ENCODE measurements at regions of chr10 and their contacts with region 1.

Region 1: DNA sequence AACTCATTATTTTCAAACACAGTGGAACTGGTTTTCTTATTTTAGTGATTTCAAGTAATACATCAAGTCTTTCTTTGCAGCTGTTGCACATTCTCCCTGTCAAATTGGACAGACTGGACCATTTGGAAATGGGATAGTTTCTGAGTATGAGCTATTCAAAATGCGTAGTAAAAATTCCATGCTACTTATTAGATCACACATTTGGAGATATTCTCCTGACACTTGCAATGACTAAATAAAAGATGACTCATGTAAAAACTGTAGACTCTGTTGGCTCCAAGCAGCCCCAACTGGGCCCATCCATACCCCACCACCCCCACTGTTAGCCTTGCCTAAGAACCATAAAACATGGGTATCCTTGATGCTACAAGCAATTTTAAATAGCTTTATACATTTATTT is 25.9 kb upstream of the BICC1 start:
- DNase-seq: no peak
- ATAC-seq: no peak
- H3K4me3 ChIP-seq: no peak overlapping the region
- H3K27ac ChIP-seq: no peak overlapping the region
- H3K4me1 ChIP-seq: no peaks in the 10 kb centered on the region
- H3K27me3 ChIP-seq: no peaks in the 10 kb centered on the region
- CTCF ChIP-seq: no peak
- EP300 ChIP-seq: no peak
- POLR2A ChIP-seq: no peak
- RAD21 ChIP-seq: no peak

Region 2: GRCh38 chr10:56973766-56974165 is 1513.1 kb before region 1 on chr10:
- CTCF ChIA-PET with region 1: no interaction called
- POLR2A ChIA-PET with region 1: no interaction called
- in situ Hi-C with region 1: no loop called
- intact Hi-C with region 1: no loop called
- DNase-seq: no peak
- ATAC-seq: no peak
- H3K4me3 ChIP-seq: no peak overlapping the region
- H3K27ac ChIP-seq: no peak overlapping the region
- H3K4me1 ChIP-seq: no peaks in the 10 kb centered on the region
- H3K27me3 ChIP-seq: no peaks in the 10 kb centered on the region
- CTCF ChIP-seq: no peak
- EP300 ChIP-seq: no peak
- POLR2A ChIP-seq: no peak
- RAD21 ChIP-seq: no peak

Region 3: DNA sequence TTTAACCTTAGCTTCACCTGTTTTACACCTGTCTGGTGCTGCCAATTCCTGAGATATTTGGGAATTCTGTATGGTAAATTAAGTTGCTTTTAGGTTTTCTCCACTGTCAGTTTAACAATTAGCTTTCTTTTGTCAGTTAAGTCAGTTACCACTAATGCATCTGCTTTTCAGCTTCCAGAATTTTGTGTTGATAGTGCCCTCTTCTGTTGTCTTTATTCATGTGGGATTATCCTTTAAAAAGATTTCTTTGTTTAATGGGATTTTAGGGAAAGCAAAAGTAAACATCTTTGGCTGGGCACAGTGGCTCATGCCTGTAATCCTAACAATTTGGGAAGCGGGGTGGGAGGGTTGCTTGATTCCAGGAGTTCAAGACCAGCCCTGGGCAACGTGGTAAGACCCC is 93.5 kb before region 1 on chr10:
- CTCF ChIA-PET with region 1: no interaction called
- POLR2A ChIA-PET with region 1: no interaction called
- in situ Hi-C with region 1: no loop called
- intact Hi-C with region 1: no loop called
- DNase-seq: no peak
- ATAC-seq: no peak
- H3K4me3 ChIP-seq: no peak overlapping the region
- H3K27ac ChIP-seq: no peak overlapping the region
- H3K4me1 ChIP-seq: 0 out of 2 replicates have a peak, but pooled peaks cover 4% of the 10 kb centered on the region
- H3K27me3 ChIP-seq: no peaks in the 10 kb centered on the region
- CTCF ChIP-seq: no peak
- EP300 ChIP-seq: no peak
- POLR2A ChIP-seq: no peak
- RAD21 ChIP-seq: no peak

Region 4: GRCh38 chr10:58414270-58415041 is 72.4 kb before region 1 on chr10:
- CTCF ChIA-PET with region 1: no interaction called
- POLR2A ChIA-PET with region 1: no interaction called
- in situ Hi-C with region 1: no loop called
- intact Hi-C with region 1: loop called (anchors 1 kb)
- DNase-seq: peak; percentile 68
- ATAC-seq: peak; percentile 72
- H3K4me3 ChIP-seq: no peak overlapping the region
- H3K27ac ChIP-seq: no peak overlapping the region
- H3K4me1 ChIP-seq: peaks cover 9% of the 10 kb centered on the region
- H3K27me3 ChIP-seq: no peaks in the 10 kb centered on the region
- CTCF ChIP-seq: peak; percentile 65
- EP300 ChIP-seq: no peak
- POLR2A ChIP-seq: no peak
- RAD21 ChIP-seq: 0 out of 2 replicates have a peak, but pooled peaks have one; percentile 23

Measured in HepG2 (cell line).